K562 (cell line): ENCODE measurements at regions of chr12 and their contacts with region 1.

Region 1: GRCh38 chr12:31728917-31729640 is at the start of gene AMN1:
- DNase-seq: peak; percentile 92 to 100 (median 95)
- ATAC-seq: peak; percentile 89
- H3K4me3 ChIP-seq: peak within 1 kb of the TSS; percentile 70
- H3K27ac ChIP-seq: peak within 1 kb of the TSS; percentile 94
- H3K4me1 ChIP-seq: peaks cover 14 to 48% of the 10 kb centered on the region in 2 experiments
- H3K27me3 ChIP-seq: no peaks in the 10 kb centered on the region
- CTCF ChIP-seq: peak in 1 of 3 experiments; percentile 18; a peak in 1 of 6 replicates
- EP300 ChIP-seq: 0 out of 2 replicates have a peak, but pooled peaks have one; percentile 4
- POLR2A ChIP-seq: peak; percentile 87
- RAD21 ChIP-seq: peak; percentile 19 to 22; a peak in 3 of 4 replicates
- polyA plus RNA-seq, gene AMN1: 26.9 to 27.6 TPM

Region 2: DNA sequence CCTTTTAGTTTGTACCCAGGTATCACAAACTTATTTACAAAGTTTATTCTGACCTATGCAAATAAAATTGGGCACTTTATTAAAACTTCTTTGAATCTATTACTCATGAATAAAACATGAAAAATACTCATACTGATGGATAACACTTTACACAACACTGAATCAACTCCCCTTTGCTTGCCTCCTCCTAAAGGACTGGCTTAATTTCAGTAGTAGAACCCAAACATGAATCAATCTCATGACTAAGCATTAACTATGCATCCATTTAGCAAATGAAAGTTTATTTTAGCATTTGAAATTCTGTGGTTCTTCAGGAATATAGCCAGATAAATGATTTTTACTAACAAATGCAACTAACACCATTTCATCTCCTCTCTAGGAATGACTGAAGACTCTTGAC is 170.6 kb before region 1 on chr12:
- CTCF ChIA-PET with region 1: no interaction called
- POLR2A ChIA-PET with region 1: no interaction called
- in situ Hi-C with region 1: no loop called
- intact Hi-C with region 1: no loop called
- DNase-seq: no peak
- ATAC-seq: no peak
- H3K4me3 ChIP-seq: no peak overlapping the region
- H3K27ac ChIP-seq: no peak overlapping the region
- H3K4me1 ChIP-seq: no peaks in the 10 kb centered on the region
- H3K27me3 ChIP-seq: peaks cover 0 to 2% of the 10 kb centered on the region in 2 experiments; a peak in 1 of 5 replicates
- CTCF ChIP-seq: no peak
- EP300 ChIP-seq: no peak
- POLR2A ChIP-seq: no peak
- RAD21 ChIP-seq: no peak

Region 3: DNA sequence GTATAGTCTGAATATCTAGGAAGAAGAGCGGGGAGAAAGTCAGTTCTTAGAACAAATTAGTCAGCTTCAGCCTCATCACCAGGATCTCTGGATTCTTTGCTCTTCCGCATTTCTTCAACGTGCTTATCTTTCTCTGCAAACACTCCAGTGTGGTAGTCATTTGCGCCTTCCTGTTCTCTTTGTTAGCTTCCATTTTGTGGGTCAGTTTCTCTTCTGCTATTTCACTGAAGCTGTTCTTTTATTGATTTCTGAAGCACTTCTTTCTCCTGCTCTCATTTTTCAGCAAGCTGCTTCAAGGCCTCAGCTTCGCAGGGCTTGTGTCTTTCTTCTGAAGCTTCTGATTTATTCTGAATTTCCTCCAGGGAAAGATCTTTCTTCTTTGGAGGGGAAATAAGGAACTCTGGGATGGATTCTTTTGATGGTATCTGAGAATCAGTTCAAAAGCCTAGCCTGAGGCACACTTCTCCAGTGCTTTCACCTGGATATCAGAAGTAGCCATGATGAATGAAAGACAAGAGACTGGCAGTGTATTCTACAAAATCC is 13.7 kb before region 1 on chr12:
- CTCF ChIA-PET with region 1: no interaction called
- POLR2A ChIA-PET with region 1: interaction called, 85 read pairs
- in situ Hi-C with region 1: no loop called
- intact Hi-C with region 1: loop called (anchors 1 kb)
- DNase-seq: peak; percentile 62 to 94 (median 73)
- ATAC-seq: peak; percentile 86
- H3K4me3 ChIP-seq: peak overlapping the region; percentile 49
- H3K27ac ChIP-seq: peak overlapping the region; percentile 97
- H3K4me1 ChIP-seq: peaks cover 8 to 21% of the 10 kb centered on the region in 2 experiments; a peak in 4 of 5 replicates
- H3K27me3 ChIP-seq: no peaks in the 10 kb centered on the region
- CTCF ChIP-seq: no peak
- EP300 ChIP-seq: peak; percentile 93
- POLR2A ChIP-seq: peak; percentile 90
- RAD21 ChIP-seq: peak in 1 of 2 experiments; percentile 34; a peak in 3 of 4 replicates

Region 4: GRCh38 chr12:31749024-31749704 is 20.1 kb after region 1 on chr12:
- CTCF ChIA-PET with region 1: no interaction called
- POLR2A ChIA-PET with region 1: interaction called, 4 read pairs
- in situ Hi-C with region 1: no loop called
- intact Hi-C with region 1: loop called (anchors 2 kb)
- DNase-seq: peak; percentile 80 to 95 (median 84)
- ATAC-seq: peak; percentile 96
- H3K4me3 ChIP-seq: no peak overlapping the region
- H3K27ac ChIP-seq: peak overlapping the region; percentile 93
- H3K4me1 ChIP-seq: peaks cover 3 to 22% of the 10 kb centered on the region in 2 experiments; a peak in 2 of 5 replicates
- H3K27me3 ChIP-seq: no peaks in the 10 kb centered on the region
- CTCF ChIP-seq: no peak
- EP300 ChIP-seq: peak; percentile 97
- POLR2A ChIP-seq: no peak; the same call in 1 of the 2 replicates
- RAD21 ChIP-seq: peak; percentile 13 to 44; a peak in 2 of 4 replicates

Region 5: GRCh38 chr12:31906557-31907301 is 177.7 kb after region 1 on chr12:
- CTCF ChIA-PET with region 1: no interaction called
- POLR2A ChIA-PET with region 1: no interaction called
- in situ Hi-C with region 1: no loop called
- intact Hi-C with region 1: no loop called
- DNase-seq: no peak
- ATAC-seq: no peak
- H3K4me3 ChIP-seq: no peak overlapping the region
- H3K27ac ChIP-seq: no peak overlapping the region
- H3K4me1 ChIP-seq: no peaks in the 10 kb centered on the region
- H3K27me3 ChIP-seq: no peaks in the 10 kb centered on the region
- CTCF ChIP-seq: no peak
- EP300 ChIP-seq: no peak
- POLR2A ChIP-seq: no peak
- RAD21 ChIP-seq: no peak

Region 6: GRCh38 chr12:32163596-32163995 is 434.5 kb after region 1 on chr12:
- CTCF ChIA-PET with region 1: no interaction called
- POLR2A ChIA-PET with region 1: no interaction called
- in situ Hi-C with region 1: no loop called
- intact Hi-C with region 1: no loop called
- DNase-seq: no peak
- ATAC-seq: no peak
- H3K4me3 ChIP-seq: no peak overlapping the region
- H3K27ac ChIP-seq: no peak overlapping the region
- H3K4me1 ChIP-seq: no peaks in the 10 kb centered on the region
- H3K27me3 ChIP-seq: no peaks in the 10 kb centered on the region
- CTCF ChIP-seq: no peak
- EP300 ChIP-seq: no peak
- POLR2A ChIP-seq: no peak
- RAD21 ChIP-seq: no peak